H1 (cell line): ENCODE measurements at regions of chr10 and their contacts with region 1.

Region 1: GRCh38 chr10:97025613-97026242 is 160.0 kb downstream of the SLIT1 start:
- DNase-seq: peak in 1 of 2 experiments; percentile 76
- H3K4me3 ChIP-seq: no peak overlapping the region
- H3K27ac ChIP-seq: no peak overlapping the region
- H3K4me1 ChIP-seq: peaks cover 0 to 6% (median 4%) of the 10 kb centered on the region in 4 experiments; a peak in 4 of 7 replicates
- H3K27me3 ChIP-seq: no peaks in the 10 kb centered on the region
- CTCF ChIP-seq: peak; percentile 80 to 91 (median 82)
- EP300 ChIP-seq: no peak
- POLR2A ChIP-seq: no peak
- RAD21 ChIP-seq: peak; percentile 64 to 67

Region 2: GRCh38 chr10:96910488-96911395 is 115.0 kb before region 1 on chr10:
- CTCF ChIA-PET with region 1: interaction called, 20 read pairs
- POLR2A ChIA-PET with region 1: no interaction called
- DNase-seq: no peak
- H3K4me3 ChIP-seq: no peak overlapping the region
- H3K27ac ChIP-seq: no peak overlapping the region
- H3K4me1 ChIP-seq: peaks cover 0 to 11% (median 0%) of the 10 kb centered on the region in 4 experiments; a peak in 1 of 7 replicates
- H3K27me3 ChIP-seq: no peaks in the 10 kb centered on the region
- CTCF ChIP-seq: peak in 2 of 3 experiments; percentile 35 to 64; a peak in 2 of 4 replicates
- EP300 ChIP-seq: no peak
- POLR2A ChIP-seq: no peak
- RAD21 ChIP-seq: peak; percentile 56 to 57

Region 3: GRCh38 chr10:96984541-96985131 is 41.1 kb before region 1 on chr10:
- CTCF ChIA-PET with region 1: interaction called, 25 read pairs
- POLR2A ChIA-PET with region 1: no interaction called
- DNase-seq: no peak
- H3K4me3 ChIP-seq: peak overlapping the region in 2 of 4 experiments; percentile 10 to 20; a peak in 2 of 8 replicates
- H3K27ac ChIP-seq: 0 out of 2 replicates have a peak overlapping the region, but pooled peaks have one; percentile 31
- H3K4me1 ChIP-seq: peaks cover 0 to 10% (median under 1%) of the 10 kb centered on the region in 4 experiments; a peak in 5 of 7 replicates
- H3K27me3 ChIP-seq: no peaks in the 10 kb centered on the region
- CTCF ChIP-seq: no peak
- EP300 ChIP-seq: no peak
- POLR2A ChIP-seq: no peak
- RAD21 ChIP-seq: no peak

Region 4: DNA sequence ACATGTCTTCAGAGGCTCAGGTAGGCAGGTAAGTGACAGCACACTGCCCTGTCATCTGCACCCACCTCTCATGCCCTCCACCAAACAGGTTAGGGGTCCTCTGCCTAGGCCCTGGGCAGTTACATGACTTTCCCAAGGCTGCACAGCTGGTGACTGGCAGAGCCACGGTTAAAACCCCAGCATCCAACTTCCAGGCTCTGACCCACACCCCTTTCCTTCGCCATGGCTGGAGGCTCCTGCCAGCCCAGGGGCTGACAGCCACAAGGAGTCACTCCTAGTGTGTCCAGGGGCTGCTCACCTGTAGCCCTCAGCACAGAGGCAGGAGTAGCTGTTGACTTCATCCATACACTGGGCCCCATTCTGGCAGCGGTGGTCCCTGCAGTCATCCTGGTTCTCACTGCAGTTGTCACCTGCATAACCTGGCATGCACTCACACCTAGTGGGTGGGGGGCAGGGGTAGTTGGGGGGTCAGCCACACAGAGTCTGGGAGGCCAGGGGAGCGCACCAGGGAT is 15.0 kb before region 1 on chr10:
- CTCF ChIA-PET with region 1: interaction called, 32 read pairs
- POLR2A ChIA-PET with region 1: no interaction called
- DNase-seq: peak in 1 of 2 experiments; percentile 32
- H3K4me3 ChIP-seq: no peak overlapping the region
- H3K27ac ChIP-seq: no peak overlapping the region
- H3K4me1 ChIP-seq: peaks cover 0 to 4% (median 1%) of the 10 kb centered on the region in 4 experiments; a peak in 4 of 7 replicates
- H3K27me3 ChIP-seq: no peaks in the 10 kb centered on the region
- CTCF ChIP-seq: no peak
- EP300 ChIP-seq: no peak
- POLR2A ChIP-seq: no peak
- RAD21 ChIP-seq: no peak

Region 5: GRCh38 chr10:97059006-97059871 is 33.5 kb after region 1 on chr10:
- CTCF ChIA-PET with region 1: interaction called, 11 read pairs
- POLR2A ChIA-PET with region 1: no interaction called
- DNase-seq: peak in 1 of 2 experiments; percentile 77
- H3K4me3 ChIP-seq: no peak overlapping the region
- H3K27ac ChIP-seq: no peak overlapping the region
- H3K4me1 ChIP-seq: peaks cover 0 to 11% (median 2%) of the 10 kb centered on the region in 4 experiments; a peak in 3 of 7 replicates
- H3K27me3 ChIP-seq: no peaks in the 10 kb centered on the region
- CTCF ChIP-seq: peak; percentile 68 to 71 (median 69)
- EP300 ChIP-seq: no peak
- POLR2A ChIP-seq: no peak
- RAD21 ChIP-seq: peak; percentile 66 to 75